ENCODE measurements at regions of chr7 and their contacts with region 1.

Region 1: DNA sequence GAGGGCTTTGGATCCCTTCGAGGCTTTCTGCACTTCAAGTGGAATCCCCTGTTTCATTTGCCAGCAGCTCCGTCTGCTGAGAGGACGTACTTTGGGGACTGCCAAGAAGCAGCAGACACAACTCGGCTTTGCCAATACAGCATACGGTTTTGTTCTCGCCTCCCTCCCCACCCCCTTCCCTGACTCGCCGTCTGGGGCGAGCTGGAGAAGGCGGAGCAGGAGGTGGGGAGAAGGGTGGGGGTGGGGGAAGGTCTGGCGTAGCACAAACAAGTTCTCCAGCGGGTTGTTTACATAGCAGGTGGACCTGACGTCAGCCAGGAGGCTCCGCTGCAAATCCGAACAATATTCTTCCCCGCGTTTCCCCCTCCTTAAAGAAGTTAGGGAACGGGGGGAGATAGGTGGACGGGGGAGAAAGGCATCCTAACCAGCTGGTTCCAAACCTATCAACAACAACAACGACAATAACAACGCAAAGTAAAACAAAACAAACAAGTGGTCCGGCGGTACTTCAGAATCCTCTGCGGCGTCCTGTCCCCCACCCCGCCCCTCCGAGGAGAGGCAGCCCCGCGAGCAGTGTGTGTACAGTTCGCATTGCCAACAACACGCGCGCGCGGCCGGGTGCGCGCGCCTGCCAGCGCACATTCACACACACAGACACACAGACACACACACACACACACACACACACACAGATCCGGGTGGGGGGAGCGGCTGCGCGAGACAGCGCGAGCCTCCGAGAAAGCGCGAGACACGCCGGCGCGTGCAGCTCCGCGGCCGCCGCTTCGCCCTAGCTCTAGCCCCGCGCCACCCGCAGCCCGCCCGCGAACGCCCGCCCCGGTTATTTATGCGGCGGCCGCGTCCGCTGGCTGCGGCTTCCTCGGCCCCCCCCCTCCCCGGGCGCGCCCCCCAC is 167.0 kb upstream of the PPP1R3A start:
- DNase-seq: peak; percentile 87 to 93
- ATAC-seq: peak; percentile 91
- H3K4me3 ChIP-seq: peak overlapping the region; percentile 85 to 91
- H3K27ac ChIP-seq: peak overlapping the region; percentile 92 to 96
- H3K4me1 ChIP-seq: no peaks in the 10 kb centered on the region
- H3K27me3 ChIP-seq: no peaks in the 10 kb centered on the region

Region 2: DNA sequence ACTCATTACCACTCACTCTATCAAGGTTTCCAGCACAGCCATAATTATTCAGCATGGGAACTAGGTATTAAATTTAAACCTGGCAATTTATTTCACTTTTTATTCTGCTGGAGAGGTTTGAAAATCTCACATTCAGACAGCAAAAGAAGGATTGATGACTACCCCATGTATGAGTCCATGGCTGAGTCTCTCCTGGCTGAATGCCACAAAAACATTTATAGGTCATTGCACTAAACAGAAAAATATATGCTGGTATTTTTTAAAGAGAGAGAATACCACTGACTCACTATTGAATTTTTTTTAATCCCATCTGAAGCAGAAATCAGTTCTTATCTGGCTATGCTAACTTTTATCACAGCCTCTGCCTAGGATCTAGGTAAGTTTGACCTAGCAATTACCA is 503.4 kb before region 1 on chr7:
- intact Hi-C with region 1: no loop called
- DNase-seq: no peak
- ATAC-seq: no peak
- H3K4me3 ChIP-seq: no peak overlapping the region
- H3K27ac ChIP-seq: no peak overlapping the region
- H3K4me1 ChIP-seq: no peaks in the 10 kb centered on the region
- H3K27me3 ChIP-seq: no peaks in the 10 kb centered on the region

Region 3: DNA sequence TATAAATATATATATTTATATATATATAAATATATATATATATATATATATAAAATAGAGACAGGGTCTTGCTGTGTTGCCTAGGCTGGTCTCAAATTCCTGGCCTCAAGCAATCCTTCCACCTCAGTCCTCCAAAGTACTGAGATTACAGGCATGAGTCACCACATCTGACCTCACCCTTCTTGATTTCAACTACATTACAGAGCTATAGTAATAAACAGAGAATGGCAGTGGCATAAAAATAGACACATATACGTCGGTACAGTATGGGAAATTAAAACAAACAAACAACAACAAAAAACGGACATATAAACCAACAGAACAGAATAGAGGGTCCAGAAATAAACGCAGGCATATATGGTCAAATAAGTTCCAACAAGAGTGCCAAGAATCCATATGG is 89.4 kb before region 1 on chr7:
- intact Hi-C with region 1: no loop called
- DNase-seq: no peak
- ATAC-seq: no peak
- H3K4me3 ChIP-seq: no peak overlapping the region
- H3K27ac ChIP-seq: no peak overlapping the region
- H3K4me1 ChIP-seq: no peaks in the 10 kb centered on the region
- H3K27me3 ChIP-seq: no peaks in the 10 kb centered on the region

Region 4: DNA sequence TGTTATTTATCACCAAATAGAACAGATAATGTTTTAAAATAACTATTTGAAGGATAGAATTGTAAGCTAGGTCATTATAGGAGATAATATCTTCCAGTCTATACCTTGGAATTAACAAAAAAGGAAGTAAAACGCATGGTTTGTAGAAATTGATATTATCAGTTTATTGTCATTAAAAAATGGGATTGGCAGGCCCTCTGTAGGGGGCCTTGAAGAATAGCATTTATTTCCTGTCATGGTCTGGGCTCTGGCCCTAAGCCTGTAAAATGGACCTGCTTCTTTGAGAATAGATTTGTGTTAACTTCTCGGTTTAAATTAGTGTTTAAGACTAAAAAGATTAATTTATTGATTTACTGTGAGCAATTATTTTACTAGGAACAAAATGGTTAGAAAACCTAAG is 131.2 kb after region 1 on chr7:
- intact Hi-C with region 1: loop called (anchors 5 to 10 kb)
- DNase-seq: no peak
- ATAC-seq: no peak
- H3K4me3 ChIP-seq: no peak overlapping the region
- H3K27ac ChIP-seq: no peak overlapping the region
- H3K4me1 ChIP-seq: peaks cover 0 to 6% of the 10 kb centered on the region in 2 donors
- H3K27me3 ChIP-seq: no peaks in the 10 kb centered on the region

Region 5: GRCh38 chr7:114334989-114335388 is 249.1 kb after region 1 on chr7:
- intact Hi-C with region 1: no loop called
- DNase-seq: no peak
- ATAC-seq: no peak
- H3K4me3 ChIP-seq: no peak overlapping the region
- H3K27ac ChIP-seq: no peak overlapping the region
- H3K4me1 ChIP-seq: no peaks in the 10 kb centered on the region
- H3K27me3 ChIP-seq: no peaks in the 10 kb centered on the region

Region 6: DNA sequence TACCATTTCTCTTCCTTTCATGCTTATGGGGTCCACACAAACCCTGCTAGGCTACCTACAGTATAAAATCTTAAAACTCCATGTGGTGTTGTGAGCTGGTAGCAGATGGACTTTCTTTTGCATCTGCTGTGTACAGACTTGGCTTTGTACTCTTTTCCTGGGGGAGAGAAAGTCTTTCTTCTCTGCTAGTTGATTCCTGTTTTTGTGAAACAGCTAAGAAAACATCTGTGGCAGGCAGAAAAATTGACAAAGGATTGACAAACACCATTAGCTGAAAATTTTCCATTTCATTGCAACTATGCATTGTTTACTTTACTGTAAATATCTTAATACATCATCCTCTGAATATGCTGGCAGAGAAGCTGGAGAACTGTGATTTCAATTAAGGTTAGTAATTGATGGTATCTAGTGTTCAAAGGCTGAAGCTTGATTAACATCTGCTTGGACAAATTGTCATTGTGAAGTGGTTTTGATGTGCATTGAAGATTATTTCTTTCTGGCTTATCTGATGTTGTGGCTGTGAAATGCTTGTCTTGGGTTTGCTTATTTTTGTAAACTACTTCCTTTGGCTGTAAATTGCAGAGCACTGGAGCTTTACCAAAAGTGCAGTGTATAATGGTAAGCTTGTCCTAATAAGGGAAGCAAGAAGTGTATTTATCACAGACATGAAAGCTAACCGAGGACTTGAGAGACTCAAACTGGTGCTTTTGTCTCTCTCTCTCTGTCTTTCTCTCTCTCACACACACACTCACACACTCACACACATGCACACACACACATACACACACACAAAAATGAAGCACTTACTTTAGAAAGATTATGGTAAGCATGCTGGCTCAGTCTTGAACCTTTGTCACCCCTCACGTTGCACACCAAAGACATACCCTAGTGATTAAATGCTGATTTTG is 328.6 kb after region 1 on chr7 and contains the start of gene FOXP2:
- intact Hi-C with region 1: loop called (anchors 5 kb)
- DNase-seq: no peak
- ATAC-seq: peak; percentile 40
- H3K4me3 ChIP-seq: peak within 1 kb of the TSS; percentile 37 to 83
- H3K27ac ChIP-seq: peak within 1 kb of the TSS; percentile 67 to 78
- H3K4me1 ChIP-seq: no peaks in the 10 kb centered on the region
- H3K27me3 ChIP-seq: no peaks in the 10 kb centered on the region
- total RNA-seq, gene FOXP2: 17.6 to 18.1 TPM

Region 7: DNA sequence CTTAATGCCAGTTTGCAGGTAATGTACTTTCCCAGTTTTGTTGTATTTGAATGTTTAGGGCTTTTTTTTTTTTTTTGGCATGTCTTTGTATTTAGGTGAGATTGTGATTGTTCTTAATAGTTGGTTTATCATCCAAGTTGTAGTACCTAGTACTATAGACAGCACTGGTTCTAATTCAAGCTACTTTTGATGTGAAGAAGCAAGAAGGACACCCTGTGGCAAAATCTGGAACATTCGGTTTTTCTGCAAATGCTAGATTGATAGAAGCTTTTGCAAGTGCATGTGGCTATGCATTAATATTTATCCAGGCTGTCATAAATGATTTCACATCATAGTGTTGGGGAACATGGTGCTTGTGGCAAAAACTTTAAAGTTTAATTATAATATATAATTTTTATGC is 577.7 kb after region 1 on chr7:
- intact Hi-C with region 1: loop called (anchors 5 to 10 kb)
- DNase-seq: no peak
- ATAC-seq: no peak
- H3K4me3 ChIP-seq: no peak overlapping the region
- H3K27ac ChIP-seq: no peak overlapping the region
- H3K4me1 ChIP-seq: no peaks in the 10 kb centered on the region
- H3K27me3 ChIP-seq: no peaks in the 10 kb centered on the region

Region 8: DNA sequence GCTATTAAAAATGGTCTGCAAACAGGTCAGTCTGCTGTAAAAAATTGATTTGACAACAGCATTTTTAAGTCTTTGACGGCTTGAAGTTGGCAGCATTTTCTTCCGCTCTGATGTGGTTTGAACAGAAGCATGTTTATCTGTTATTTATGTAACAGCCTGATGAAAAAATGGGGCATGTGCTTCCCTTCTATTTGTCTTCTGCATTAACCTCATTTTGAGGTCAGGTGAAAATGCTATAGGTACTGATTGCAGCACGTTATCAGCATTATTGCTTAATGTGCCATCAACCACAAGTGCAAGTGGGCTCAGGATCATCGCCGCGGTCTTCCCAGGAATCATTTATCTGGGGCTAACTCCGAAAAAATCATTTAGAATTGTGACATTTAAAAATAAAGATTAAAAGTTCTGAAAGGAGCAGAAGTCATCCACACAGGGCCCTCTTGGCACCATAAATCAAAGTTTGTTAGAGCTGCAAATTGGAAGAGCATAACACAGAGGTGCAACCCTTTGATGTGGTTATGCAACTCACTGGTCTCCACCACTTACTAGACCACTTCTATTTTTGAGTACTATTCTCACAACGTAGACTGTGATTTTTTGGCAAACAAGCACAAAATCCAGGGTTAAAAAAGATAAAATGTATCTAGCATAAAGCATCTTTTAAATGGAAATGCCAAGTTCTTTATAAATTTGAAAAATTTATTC is 1143.7 kb after region 1 on chr7:
- intact Hi-C with region 1: loop called in 1 of 2 experiments (anchors 10 kb)
- DNase-seq: no peak
- ATAC-seq: no peak
- H3K4me3 ChIP-seq: no peak overlapping the region
- H3K27ac ChIP-seq: no peak overlapping the region
- H3K4me1 ChIP-seq: no peaks in the 10 kb centered on the region
- H3K27me3 ChIP-seq: no peaks in the 10 kb centered on the region

Region 9: GRCh38 chr7:115910541-115911164 is 1824.8 kb after region 1 on chr7:
- intact Hi-C with region 1: loop called in 1 of 2 experiments (anchors 5 kb)
- DNase-seq: no peak
- ATAC-seq: no peak
- H3K4me3 ChIP-seq: no peak overlapping the region
- H3K27ac ChIP-seq: no peak overlapping the region
- H3K4me1 ChIP-seq: no peaks in the 10 kb centered on the region
- H3K27me3 ChIP-seq: no peaks in the 10 kb centered on the region

Measured in aorta (tissue), 5 donors.